ENCODE measurements at regions of chr15 and their contacts with region 1.

Region 1: GRCh38 chr15:101294731-101295606 is at the start of gene SNRPA1:
- DNase-seq: peak; percentile 99
- H3K4me3 Mint-ChIP-seq: peak within 1 kb of the TSS; percentile 98
- H3K27ac Mint-ChIP-seq: peak within 1 kb of the TSS; percentile 89
- H3K4me1 Mint-ChIP-seq: no peaks in the 10 kb centered on the region
- H3K27me3 Mint-ChIP-seq: no peaks in the 10 kb centered on the region
- CTCF ChIP-seq: no peak
- total RNA-seq, gene SNRPA1: 123 and 140 TPM in 2 replicates

Region 2: GRCh38 chr15:101134780-101135179 is 160.2 kb before region 1 on chr15:
- CTCF ChIA-PET with region 1: interaction called, 10 read pairs
- intact Hi-C with region 1: no loop called
- DNase-seq: no peak
- H3K4me3 Mint-ChIP-seq: no peak overlapping the region
- H3K27ac Mint-ChIP-seq: no peak overlapping the region
- H3K4me1 Mint-ChIP-seq: no peaks in the 10 kb centered on the region
- H3K27me3 Mint-ChIP-seq: peaks cover 15% of the 10 kb centered on the region
- CTCF ChIP-seq: no peak

Region 3: DNA sequence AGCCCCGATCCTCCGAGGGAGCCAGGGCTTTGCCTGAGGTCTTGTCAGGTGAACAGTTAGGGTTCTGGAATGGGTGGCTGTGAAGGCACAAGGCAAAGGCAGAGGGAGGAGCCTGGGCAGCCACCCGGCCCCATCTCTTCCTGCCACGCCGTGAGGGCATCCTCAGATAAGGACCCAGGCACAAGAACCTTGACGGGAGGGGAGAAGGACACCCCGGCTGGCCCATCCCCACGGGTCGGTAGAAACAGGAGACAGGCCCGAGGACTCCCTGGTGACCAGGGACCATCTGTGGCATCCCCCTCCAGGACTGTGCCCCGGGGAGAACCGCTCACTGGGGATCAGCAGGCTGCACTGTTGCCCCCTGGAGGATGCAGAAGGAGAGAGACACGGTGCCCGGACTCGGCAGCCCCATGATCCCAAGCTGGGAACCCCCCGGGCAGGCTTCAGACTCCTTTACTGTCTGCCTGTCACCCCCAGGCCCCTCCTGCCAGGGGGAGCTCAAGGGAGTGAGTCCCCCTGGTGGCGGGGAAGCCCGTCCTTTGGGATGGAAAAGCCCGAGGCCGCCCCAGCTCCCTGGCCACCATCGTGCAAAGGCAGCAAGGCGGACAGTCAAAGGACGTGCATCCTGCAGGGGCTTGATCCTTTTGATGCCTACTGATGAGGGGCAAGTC is 206.9 kb after region 1 on chr15:
- CTCF ChIA-PET with region 1: interaction called, 5 read pairs
- intact Hi-C with region 1: loop called (anchors 2 kb)
- DNase-seq: peak; percentile 68
- H3K4me3 Mint-ChIP-seq: no peak overlapping the region
- H3K27ac Mint-ChIP-seq: no peak overlapping the region
- H3K4me1 Mint-ChIP-seq: peaks cover 3% of the 10 kb centered on the region
- H3K27me3 Mint-ChIP-seq: peaks cover 57% of the 10 kb centered on the region
- CTCF ChIP-seq: peak; percentile 67

Region 4: DNA sequence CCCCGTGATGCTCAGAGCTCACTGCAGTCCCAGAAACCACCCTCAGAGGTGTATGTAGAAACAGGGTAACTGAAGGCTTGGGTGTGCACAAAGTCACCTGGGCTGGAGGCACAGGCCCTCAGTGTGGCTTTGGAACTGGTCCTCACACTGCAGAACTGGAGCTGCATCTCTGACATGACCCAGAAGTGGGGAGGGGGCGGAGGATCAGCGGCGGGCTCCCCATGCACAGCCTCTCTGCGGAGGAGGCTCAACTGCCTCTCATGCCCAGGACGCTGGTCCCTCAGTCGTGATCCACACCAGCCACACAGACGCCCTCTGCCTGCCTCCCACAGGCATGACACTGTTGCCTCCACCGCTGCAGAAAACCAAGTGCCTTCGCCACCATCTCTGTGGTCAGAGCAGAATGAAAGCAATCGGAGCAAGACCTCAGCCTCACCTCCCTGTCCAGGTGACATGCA is 283.5 kb after region 1 on chr15:
- CTCF ChIA-PET with region 1: no interaction called
- intact Hi-C with region 1: loop called (anchors 1 kb)
- DNase-seq: peak; percentile 72
- H3K4me3 Mint-ChIP-seq: peak overlapping the region; percentile 17
- H3K27ac Mint-ChIP-seq: no peak overlapping the region
- H3K4me1 Mint-ChIP-seq: peaks cover 34% of the 10 kb centered on the region
- H3K27me3 Mint-ChIP-seq: peaks cover 36% of the 10 kb centered on the region
- CTCF ChIP-seq: peak; percentile 21

Measured in Calu3 (cell line).